ENCODE measurements at regions of chr10 and their contacts with region 1.

Region 1: DNA sequence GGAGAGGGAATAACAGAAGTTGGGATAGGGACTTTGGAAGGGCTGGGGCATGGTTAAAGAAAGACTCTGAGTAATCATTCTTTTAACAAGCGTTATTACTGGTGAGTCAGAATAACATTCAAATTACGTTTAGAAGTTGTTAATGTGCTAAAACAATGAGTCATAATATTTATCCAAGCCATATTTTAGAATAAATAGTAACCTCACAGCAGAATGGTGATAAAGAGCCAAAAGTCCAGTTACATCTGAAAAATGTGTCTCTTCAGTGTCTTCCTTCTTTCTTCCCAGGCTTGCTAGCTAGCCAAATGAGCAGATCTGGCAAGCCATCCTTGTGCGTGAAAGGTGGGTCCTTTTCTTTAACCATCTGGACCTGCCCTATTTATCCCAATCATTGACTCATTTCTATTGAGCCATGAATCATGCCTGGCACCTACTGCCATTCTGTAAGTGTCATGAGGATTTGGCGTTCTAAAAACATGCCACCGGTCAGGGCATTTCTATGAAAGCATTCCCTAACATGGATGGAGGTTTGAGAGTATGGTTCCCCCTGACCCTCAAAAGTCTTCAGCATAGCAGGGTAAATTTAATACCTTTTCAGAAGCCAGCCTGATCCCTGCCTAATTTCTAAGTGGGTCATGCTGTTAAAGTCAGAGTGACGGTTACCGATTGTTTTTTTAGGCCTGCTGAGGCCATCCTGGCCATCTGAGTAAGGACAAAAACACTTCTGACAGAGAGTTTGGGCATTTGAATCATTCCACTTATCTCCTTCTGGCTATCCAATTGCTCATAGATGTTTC is 26.8 kb downstream of the MYPN start:
- DNase-seq: peak; percentile 88
- H3K4me3 ChIP-seq: peak overlapping the region; percentile 7 to 38 (median 26)
- H3K27ac ChIP-seq: peak overlapping the region; percentile 93
- H3K4me1 ChIP-seq: peaks cover 23% of the 10 kb centered on the region
- H3K27me3 ChIP-seq: no peaks in the 10 kb centered on the region
- CTCF ChIP-seq: no peak

Region 2: GRCh38 chr10:67629461-67629971 is 506.6 kb before region 1 on chr10:
- CTCF ChIA-PET with region 1: no interaction called
- dilution Hi-C with region 1: no loop called
- in situ Hi-C with region 1: no loop called
- intact Hi-C with region 1: no loop called
- DNase-seq: peak; percentile 30
- H3K4me3 ChIP-seq: no peak overlapping the region
- H3K27ac ChIP-seq: no peak overlapping the region
- H3K4me1 ChIP-seq: no peaks in the 10 kb centered on the region
- H3K27me3 ChIP-seq: no peaks in the 10 kb centered on the region
- CTCF ChIP-seq: no peak

Region 3: GRCh38 chr10:68096913-68097503 is 39.1 kb before region 1 on chr10:
- CTCF ChIA-PET with region 1: no interaction called
- dilution Hi-C with region 1: no loop called
- in situ Hi-C with region 1: no loop called
- intact Hi-C with region 1: loop called (anchors 1 kb)
- DNase-seq: peak; percentile 94
- H3K4me3 ChIP-seq: no peak overlapping the region
- H3K27ac ChIP-seq: peak overlapping the region; percentile 50
- H3K4me1 ChIP-seq: peaks cover 62% of the 10 kb centered on the region
- H3K27me3 ChIP-seq: no peaks in the 10 kb centered on the region
- CTCF ChIP-seq: no peak

Region 4: DNA sequence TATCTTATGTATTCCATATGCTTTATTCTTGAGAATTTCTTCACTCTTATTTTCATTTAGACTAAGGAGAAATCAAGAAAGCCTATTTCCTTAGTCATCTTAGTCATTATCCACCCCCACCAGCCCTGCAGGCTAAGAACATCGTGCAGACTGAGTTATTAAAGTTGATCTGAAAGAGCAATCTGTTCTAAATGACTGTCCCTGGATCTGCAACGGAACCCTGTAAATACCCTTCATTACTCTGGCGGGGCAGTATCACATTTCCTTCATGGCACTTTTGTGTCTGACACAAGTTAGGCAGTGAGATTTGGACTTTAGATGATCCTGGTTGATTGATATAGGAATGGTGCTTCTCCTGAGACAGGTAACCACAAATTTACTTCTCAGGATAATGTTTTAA is 30.3 kb before region 1 on chr10:
- CTCF ChIA-PET with region 1: no interaction called
- dilution Hi-C with region 1: no loop called
- in situ Hi-C with region 1: no loop called
- intact Hi-C with region 1: loop called (anchors 1 kb)
- DNase-seq: peak; percentile 75
- H3K4me3 ChIP-seq: peak overlapping the region; percentile 16 to 52 (median 49)
- H3K27ac ChIP-seq: peak overlapping the region; percentile 81
- H3K4me1 ChIP-seq: peaks cover 28% of the 10 kb centered on the region
- H3K27me3 ChIP-seq: no peaks in the 10 kb centered on the region
- CTCF ChIP-seq: no peak